ENCODE measurements at regions of chr16 and their contacts with region 1.

Region 1: GRCh38 chr16:83952940-83953795 is at the start of gene OSGIN1:
- DNase-seq: peak; percentile 98
- H3K4me3 ChIP-seq: peak within 1 kb of the TSS; percentile 36 to 62 (median 57)
- H3K27ac ChIP-seq: peak within 1 kb of the TSS; percentile 89 to 93 (median 91)
- H3K4me1 ChIP-seq: peaks cover 0 to 37% (median 29%) of the 10 kb centered on the region in 4 donors
- H3K27me3 ChIP-seq: no peaks in the 10 kb centered on the region
- CTCF ChIP-seq: no peak
- EP300 ChIP-seq: peak in 3 of 4 donors; percentile 40 to 78 (median 63)
- POLR2A ChIP-seq: peak; percentile 77 to 90
- total RNA-seq, gene OSGIN1: 3.6 to 5.4 (median 4.3) TPM

Region 2: GRCh38 chr16:83807710-83808572 is 145.2 kb before region 1 on chr16 and contains the start of gene HSBP1:
- intact Hi-C with region 1: loop called (anchors 5 kb)
- DNase-seq: peak; percentile 97
- H3K4me3 ChIP-seq: peak within 1 kb of the TSS; percentile 71 to 97 (median 83)
- H3K27ac ChIP-seq: peak within 1 kb of the TSS; percentile 81 to 83 (median 83)
- H3K4me1 ChIP-seq: peaks cover 0 to 38% (median 33%) of the 10 kb centered on the region in 4 donors
- H3K27me3 ChIP-seq: no peaks in the 10 kb centered on the region
- CTCF ChIP-seq: no peak
- EP300 ChIP-seq: peak in 1 of 4 donors; percentile 4
- POLR2A ChIP-seq: peak; percentile 17 to 19
- total RNA-seq, gene HSBP1: 7.5 to 16.9 (median 12.7) TPM

Region 3: GRCh38 chr16:83898463-83899271 is 54.5 kb before region 1 on chr16 and contains the start of gene MLYCD:
- intact Hi-C with region 1: loop called (anchors 2 kb)
- DNase-seq: peak; percentile 95
- H3K4me3 ChIP-seq: peak within 1 kb of the TSS; percentile 83 to 94 (median 88)
- H3K27ac ChIP-seq: peak within 1 kb of the TSS; percentile 90 to 98 (median 96)
- H3K4me1 ChIP-seq: peaks cover 0 to 48% (median 38%) of the 10 kb centered on the region in 4 donors
- H3K27me3 ChIP-seq: no peaks in the 10 kb centered on the region
- CTCF ChIP-seq: no peak
- EP300 ChIP-seq: no peak
- POLR2A ChIP-seq: no peak
- total RNA-seq, gene MLYCD: 9.3 to 16.3 (median 10.8) TPM

Region 4: DNA sequence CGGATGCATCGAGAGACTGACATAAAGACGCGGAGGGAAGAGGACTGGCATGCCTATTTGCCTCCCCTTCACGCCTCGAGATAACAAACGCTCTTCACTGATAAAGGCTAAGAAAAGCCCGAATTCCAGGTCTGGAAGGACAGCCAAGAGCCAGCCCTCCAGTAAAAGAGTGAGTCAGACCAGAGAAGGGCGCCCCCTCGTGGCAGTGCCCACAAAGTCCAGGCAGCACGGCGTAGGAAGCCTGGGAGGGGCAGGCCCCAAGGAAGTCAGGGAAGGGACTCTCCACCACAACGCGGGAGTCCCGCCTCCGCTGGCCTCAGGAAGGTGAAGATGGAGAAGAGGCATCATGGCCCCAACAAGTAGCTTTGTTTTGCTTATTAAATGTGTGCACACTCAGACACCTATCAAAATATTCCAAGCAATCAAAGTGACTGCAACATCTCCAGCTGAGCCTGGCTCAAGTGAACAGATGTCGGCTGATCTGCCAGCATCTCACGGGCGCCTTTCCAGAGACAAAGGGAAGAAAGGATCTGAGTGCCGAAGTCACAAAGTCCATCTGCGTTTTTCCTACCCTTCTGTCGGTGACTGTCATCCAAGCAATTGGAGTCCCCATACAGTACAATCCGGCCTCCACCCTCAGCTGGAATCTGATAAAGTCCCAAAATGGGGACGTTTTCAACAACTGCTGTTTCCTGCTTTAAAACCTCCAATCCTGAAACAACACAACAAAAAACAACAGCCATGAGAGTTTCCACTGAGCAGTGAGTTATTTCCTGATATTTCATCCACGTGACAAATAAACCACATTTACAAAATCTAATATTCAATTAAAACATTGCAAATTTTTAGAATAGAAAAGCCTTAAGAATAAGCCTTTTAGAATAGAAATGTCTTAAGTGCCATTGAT is 109.8 kb after region 1 on chr16:
- intact Hi-C with region 1: loop called (anchors 2 kb)
- DNase-seq: peak; percentile 84
- H3K4me3 ChIP-seq: no peak overlapping the region
- H3K27ac ChIP-seq: no peak overlapping the region
- H3K4me1 ChIP-seq: no peaks in the 10 kb centered on the region
- H3K27me3 ChIP-seq: no peaks in the 10 kb centered on the region
- CTCF ChIP-seq: peak in 3 of 4 experiments; percentile 59 to 81 (median 81)
- EP300 ChIP-seq: no peak
- POLR2A ChIP-seq: no peak

Region 5: GRCh38 chr16:84116720-84117493 is 163.7 kb after region 1 on chr16 and contains the start of gene MBTPS1:
- intact Hi-C with region 1: no loop called
- DNase-seq: peak; percentile 99
- H3K4me3 ChIP-seq: peak within 1 kb of the TSS; percentile 83 to 99 (median 86)
- H3K27ac ChIP-seq: peak within 1 kb of the TSS; percentile 90 to 95 (median 94)
- H3K4me1 ChIP-seq: peaks cover 0 to 27% (median 22%) of the 10 kb centered on the region in 4 donors
- H3K27me3 ChIP-seq: no peaks in the 10 kb centered on the region
- CTCF ChIP-seq: no peak
- EP300 ChIP-seq: no peak
- POLR2A ChIP-seq: peak; percentile 72
- total RNA-seq, gene MBTPS1: 69.3 to 83.6 (median 79.3) TPM

Region 6: DNA sequence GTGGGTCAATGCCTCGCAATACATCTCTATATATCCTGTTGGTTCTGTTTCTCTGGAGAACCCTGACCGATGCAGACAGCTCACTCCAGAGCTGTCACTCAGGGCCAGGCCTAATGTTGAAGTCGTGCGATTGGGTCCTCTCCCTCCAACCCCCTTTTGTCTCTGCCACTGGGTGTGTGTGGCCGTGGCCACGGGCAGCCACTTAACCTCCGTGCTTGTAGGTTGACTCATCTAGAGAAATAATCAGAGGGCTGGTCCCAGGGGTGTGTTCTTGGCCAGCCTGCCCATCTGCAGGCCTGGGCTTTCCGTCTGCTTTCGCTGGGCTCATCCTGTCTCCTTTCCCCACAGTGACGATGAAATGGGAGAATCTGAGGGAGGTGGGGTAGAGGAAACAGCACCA is 245.2 kb after region 1 on chr16:
- intact Hi-C with region 1: no loop called
- DNase-seq: no peak
- H3K4me3 ChIP-seq: no peak overlapping the region
- H3K27ac ChIP-seq: no peak overlapping the region
- H3K4me1 ChIP-seq: no peaks in the 10 kb centered on the region
- H3K27me3 ChIP-seq: peaks cover 0 to 12% (median 0%) of the 10 kb centered on the region in 3 donors
- CTCF ChIP-seq: no peak
- EP300 ChIP-seq: no peak
- POLR2A ChIP-seq: no peak

Region 7: DNA sequence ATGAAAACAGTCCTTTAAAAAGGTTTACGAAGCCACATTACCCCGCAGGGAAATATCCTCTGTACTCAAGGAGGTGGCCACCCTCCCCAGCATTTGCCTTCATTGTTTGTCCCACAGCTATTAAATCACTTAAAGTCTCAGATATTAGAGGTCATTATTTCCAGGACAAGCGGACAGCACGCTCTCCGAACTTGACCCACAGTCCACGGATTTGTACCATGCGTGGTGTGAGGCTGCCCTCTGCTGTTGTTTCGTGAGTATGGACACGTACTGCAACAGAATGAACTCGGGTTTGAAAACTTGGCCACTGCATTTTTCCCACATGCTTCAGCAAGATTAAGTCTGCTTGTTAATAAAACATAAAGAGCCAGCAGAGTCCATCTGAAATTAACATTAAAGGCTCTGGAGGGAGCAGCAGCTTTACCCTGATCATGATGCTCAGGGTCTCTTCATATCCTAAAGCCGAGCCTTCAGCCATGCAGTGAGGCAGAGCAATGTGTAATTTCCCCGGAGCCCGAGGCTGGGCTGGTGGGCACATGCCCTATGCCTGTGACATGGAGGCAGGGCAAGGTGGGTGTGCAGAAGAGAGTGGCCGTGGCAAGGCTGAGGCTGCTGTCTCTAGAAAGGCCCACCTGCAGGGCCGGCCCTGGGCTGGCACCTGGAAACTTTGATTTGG is 531.5 kb after region 1 on chr16:
- intact Hi-C with region 1: loop called (anchors 10 kb)
- DNase-seq: no peak
- H3K4me3 ChIP-seq: no peak overlapping the region
- H3K27ac ChIP-seq: no peak overlapping the region
- H3K4me1 ChIP-seq: peaks cover 0 to 4% (median 0%) of the 10 kb centered on the region in 4 donors
- H3K27me3 ChIP-seq: no peaks in the 10 kb centered on the region
- CTCF ChIP-seq: peak; percentile 66 to 84 (median 72)
- EP300 ChIP-seq: no peak
- POLR2A ChIP-seq: no peak

Measured in sigmoid colon (tissue), 7 donors.